ENCODE measurements at regions of chr18 and their contacts with region 1.

Region 1: DNA sequence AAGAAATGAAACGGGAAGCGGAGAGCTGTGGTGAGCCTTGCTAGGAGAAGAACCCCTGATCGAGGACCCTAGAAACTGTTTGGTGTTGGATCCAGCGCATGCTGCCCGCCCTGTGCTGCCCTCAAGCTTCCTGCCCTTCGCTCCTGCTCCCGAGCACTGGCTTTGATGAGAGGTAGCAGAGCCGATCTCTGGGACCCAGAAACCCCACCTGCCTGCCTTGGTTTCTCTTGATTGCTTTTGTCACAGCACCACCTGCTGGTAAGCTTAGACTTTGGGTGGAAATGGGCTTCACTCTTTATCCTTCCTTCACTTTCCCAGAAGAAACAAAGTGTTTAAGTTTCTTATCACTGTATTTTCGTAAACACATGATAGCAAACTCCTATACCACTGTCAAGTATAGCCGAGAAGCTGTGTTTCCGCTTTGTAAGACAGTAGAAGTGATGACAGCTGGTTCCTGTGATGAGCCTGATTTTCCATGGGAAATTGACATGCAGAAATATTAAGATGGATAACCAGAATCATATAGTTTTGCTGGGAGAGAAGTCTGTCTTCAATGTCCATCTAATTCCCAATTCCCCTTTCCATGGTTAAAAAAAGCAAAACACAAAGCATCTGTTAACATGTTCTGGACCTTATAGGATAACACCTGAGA is 267.4 kb downstream of the PHLPP1 start:
- DNase-seq: peak; percentile 11
- H3K4me3 ChIP-seq: no peak overlapping the region
- H3K27ac ChIP-seq: no peak overlapping the region
- H3K27me3 ChIP-seq: no peaks in the 10 kb centered on the region
- CTCF ChIP-seq: peak; percentile 85

Region 2: GRCh38 chr18:62425465-62426195 is 557.1 kb before region 1 on chr18:
- CTCF ChIA-PET with region 1: interaction called, 11 read pairs
- POLR2A ChIA-PET with region 1: no interaction called
- DNase-seq: peak; percentile 92
- H3K4me3 ChIP-seq: peak overlapping the region; percentile 55
- H3K27ac ChIP-seq: peak overlapping the region; percentile 77
- H3K27me3 ChIP-seq: peaks cover 11% of the 10 kb centered on the region
- CTCF ChIP-seq: peak; percentile 91

Region 3: GRCh38 chr18:62576845-62577512 is 405.7 kb before region 1 on chr18:
- CTCF ChIA-PET with region 1: interaction called, 13 read pairs
- POLR2A ChIA-PET with region 1: no interaction called
- DNase-seq: no peak
- H3K4me3 ChIP-seq: no peak overlapping the region
- H3K27ac ChIP-seq: no peak overlapping the region
- H3K27me3 ChIP-seq: no peaks in the 10 kb centered on the region
- CTCF ChIP-seq: no peak

Region 4: DNA sequence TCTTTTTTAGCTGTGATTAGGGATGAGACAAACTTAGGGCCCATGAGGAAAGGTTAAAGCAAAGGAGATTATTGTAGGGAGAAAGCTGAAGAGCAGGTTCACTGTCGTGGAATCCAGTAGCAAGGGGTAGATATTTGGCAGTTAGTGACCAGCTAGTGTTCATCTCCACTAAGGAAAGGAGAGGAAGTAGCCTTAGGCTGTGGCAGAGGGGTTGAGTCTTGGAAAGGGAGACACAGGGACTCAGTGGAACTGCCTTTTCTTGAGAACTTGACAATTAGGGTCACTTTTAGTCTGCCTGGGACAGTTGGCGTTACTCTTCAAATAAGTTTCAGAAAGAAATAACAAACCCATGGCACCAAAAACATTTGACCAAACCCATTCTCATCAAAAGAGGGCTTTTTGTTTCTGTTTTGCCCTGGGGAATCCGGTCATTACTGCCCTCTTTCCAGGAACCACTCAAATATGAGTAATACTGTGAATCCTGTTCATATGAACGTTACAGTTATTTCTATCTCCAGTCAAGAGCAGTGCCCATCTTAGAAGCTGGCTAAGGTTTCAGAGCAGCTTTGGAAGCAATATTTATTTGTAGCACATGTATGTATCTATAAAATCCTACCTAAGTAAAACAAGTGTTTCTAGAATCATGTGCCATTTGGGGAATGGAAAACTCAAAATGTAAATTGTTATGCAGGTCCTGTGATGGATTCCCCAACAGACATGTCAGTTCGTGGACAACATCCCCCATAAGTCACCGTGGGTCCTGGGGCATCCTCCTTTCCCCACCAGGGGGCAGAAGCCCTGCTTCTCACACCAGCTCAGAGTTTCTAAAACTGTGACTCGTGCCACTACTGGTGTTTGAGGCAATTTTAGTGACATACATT is 344.7 kb before region 1 on chr18:
- CTCF ChIA-PET with region 1: interaction called, 12 read pairs
- POLR2A ChIA-PET with region 1: no interaction called
- DNase-seq: no peak
- H3K4me3 ChIP-seq: no peak overlapping the region
- H3K27ac ChIP-seq: no peak overlapping the region
- H3K27me3 ChIP-seq: peaks cover 3% of the 10 kb centered on the region
- CTCF ChIP-seq: peak; percentile 50

Region 5: DNA sequence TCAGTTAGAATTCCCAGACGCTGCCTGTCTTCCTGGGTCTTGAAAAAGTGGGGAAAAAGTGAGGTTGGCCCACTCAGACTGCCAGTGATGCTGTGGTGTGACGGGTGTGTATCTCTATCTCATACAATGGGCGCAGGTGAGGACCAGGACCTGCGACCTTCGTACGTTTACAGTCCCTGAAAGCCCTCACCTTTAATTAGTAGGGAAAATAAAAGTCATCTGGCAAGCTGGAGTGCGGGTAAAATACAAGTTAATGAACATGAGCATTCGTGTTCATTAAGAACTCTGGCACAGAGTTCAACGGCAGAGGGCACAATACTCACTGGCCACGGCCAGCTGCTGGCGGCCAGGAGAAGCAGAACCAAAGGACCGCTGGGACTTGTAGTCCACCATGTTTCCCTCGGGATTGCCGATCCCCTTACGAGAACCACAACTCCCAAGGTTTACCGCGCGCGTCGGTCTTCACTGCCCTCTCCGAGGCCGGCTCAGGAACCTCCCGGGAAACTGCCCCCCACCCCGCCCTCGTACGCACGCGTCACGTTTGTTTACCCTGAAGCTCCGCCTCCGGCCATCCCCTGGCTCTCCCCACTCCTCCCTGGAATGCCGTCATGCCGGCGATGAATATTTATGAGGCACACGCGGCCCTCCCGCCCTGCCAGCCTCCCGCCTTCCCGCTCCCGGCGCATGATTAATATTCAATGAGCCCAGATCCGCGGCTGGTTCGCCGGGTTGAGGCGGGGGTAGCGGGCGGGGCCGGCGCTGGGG is 267.9 kb before region 1 on chr18:
- CTCF ChIA-PET with region 1: interaction called, 92 read pairs
- POLR2A ChIA-PET with region 1: interaction called, 3 read pairs
- DNase-seq: peak; percentile 100
- H3K4me3 ChIP-seq: peak overlapping the region; percentile 71
- H3K27ac ChIP-seq: peak overlapping the region; percentile 68
- H3K27me3 ChIP-seq: no peaks in the 10 kb centered on the region
- CTCF ChIP-seq: peak; percentile 81

Region 6: DNA sequence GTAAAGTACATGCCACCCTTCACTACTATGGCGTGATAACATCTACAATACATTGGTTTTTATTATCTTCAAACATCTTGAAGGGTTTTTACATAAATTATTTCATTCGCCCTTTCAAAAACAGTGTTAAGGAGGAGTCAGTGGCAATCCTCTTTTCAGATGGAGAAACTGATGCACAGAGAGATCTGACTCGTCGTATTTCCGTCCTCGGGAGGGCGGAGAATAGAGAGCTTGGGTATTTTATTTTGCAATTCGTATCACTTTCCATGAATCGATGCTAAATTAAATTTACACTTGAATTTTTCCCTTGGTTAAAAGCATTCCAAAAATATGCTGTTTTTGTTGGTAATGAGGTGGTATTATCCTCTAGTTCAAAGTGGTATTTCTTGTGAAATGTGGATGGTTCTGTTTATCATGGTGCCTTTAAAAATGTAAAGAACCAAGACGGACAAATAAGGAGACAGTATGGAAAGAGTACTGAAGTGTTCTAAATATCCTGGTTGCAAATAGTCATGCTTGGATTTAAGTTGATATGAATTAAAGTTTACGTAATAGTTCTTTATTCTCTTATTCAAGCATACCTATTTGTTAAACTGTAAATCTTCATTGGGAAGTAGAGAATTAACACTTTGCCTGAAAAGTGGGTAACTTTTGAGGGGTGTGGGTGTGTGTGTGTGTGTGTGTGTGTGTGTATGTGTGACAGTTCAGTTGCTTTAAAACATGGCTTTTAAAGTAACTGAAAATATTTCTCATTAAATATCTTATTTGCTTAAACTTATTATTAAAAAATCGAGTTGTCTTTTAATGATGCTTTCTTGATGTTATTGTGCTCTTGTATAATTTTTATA is 261.7 kb before region 1 on chr18:
- CTCF ChIA-PET with region 1: interaction called, 92 read pairs
- POLR2A ChIA-PET with region 1: no interaction called
- DNase-seq: no peak
- H3K4me3 ChIP-seq: no peak overlapping the region
- H3K27ac ChIP-seq: no peak overlapping the region
- H3K27me3 ChIP-seq: no peaks in the 10 kb centered on the region
- CTCF ChIP-seq: no peak

Region 7: GRCh38 chr18:63025251-63026090 is 42.7 kb after region 1 on chr18:
- CTCF ChIA-PET with region 1: no interaction called
- POLR2A ChIA-PET with region 1: no interaction called
- DNase-seq: no peak
- H3K4me3 ChIP-seq: no peak overlapping the region
- H3K27ac ChIP-seq: no peak overlapping the region
- H3K27me3 ChIP-seq: peaks cover 2% of the 10 kb centered on the region
- CTCF ChIP-seq: no peak

Region 8: DNA sequence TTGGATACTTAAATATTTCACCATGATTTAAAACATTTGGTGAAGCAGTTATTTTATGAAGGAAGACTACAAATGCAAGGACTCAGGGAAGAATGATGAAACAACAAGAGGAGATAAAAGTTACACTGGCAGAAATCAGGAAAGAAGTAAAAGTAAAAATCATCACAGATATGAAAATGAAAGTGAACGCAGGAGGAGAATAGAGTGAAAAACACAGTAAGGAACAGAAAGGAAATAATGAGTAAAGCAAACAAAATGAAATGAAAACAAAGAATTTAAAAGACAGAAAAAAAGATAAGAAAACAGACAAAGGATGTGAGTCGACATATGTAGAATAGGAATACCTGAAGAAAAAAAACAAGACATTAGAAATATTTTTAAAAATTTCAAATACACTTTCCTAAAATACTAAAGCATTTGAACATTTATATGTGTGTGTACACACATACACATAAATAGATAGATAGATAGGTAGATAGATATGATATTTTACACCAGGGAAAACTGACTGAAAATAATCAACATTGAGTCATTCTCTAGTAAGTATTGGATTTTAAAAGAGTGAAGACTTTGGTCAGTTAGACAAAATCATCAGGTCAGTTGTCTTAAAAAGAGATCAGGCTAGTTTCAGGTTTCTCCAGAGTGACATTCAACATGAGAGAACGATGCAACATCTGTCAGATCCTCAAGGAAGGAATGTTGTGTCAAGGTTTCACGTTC is 396.4 kb after region 1 on chr18:
- CTCF ChIA-PET with region 1: no interaction called
- POLR2A ChIA-PET with region 1: no interaction called
- DNase-seq: no peak
- H3K4me3 ChIP-seq: no peak overlapping the region
- H3K27ac ChIP-seq: no peak overlapping the region
- H3K27me3 ChIP-seq: no peaks in the 10 kb centered on the region
- CTCF ChIP-seq: no peak